CD8-positive, alpha-beta memory T cell (primary cell): ENCODE measurements at regions of chrX and their contacts with region 1.

Region 1: GRCh38 chrX:12974796-12975669 is at the start of gene TMSB4X:
- DNase-seq: peak; percentile 72 to 92 (median 79)
- H3K4me3 ChIP-seq: peak within 1 kb of the TSS; percentile 97
- H3K4me3 Mint-ChIP-seq: peak within 1 kb of the TSS; percentile 97 to 100 (median 98)
- H3K27ac ChIP-seq: peak within 1 kb of the TSS; percentile 96
- H3K27ac Mint-ChIP-seq: peak within 1 kb of the TSS; percentile 81 to 99 (median 96)
- H3K4me1 ChIP-seq: peaks cover 21% of the 10 kb centered on the region
- H3K4me1 Mint-ChIP-seq: peaks cover 32 to 58% (median 58%) of the 10 kb centered on the region in 3 donors
- H3K27me3 ChIP-seq: no peaks in the 10 kb centered on the region
- H3K27me3 Mint-ChIP-seq: peaks cover 0 to 39% of the 10 kb centered on the region in 2 donors
- total RNA-seq, gene TMSB4X: 3,415 to 3,478 TPM

Region 2: DNA sequence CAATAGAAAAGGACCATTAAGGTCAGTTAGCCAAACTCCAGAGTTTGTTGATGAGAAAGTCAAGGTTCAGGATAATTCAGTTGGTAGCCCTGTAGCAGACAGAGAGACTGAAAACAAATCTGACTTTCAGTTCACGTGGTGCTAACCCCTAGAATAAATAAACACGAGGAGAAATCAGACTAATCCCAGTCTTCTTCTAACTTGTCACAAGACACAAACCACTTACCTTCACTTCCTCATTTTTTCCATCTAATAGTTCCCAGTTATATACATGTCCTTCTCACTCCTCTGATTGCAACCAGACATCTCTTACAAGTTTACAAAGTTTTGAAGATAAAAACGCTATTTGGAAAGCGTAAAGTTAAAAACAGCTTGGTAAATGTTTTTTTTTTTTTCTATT is 100.5 kb before region 1 on chrX:
- CTCF ChIA-PET with region 1: no interaction called
- POLR2A ChIA-PET with region 1: no interaction called
- DNase-seq: no peak
- H3K4me3 ChIP-seq: no peak overlapping the region
- H3K4me3 Mint-ChIP-seq: no peak overlapping the region
- H3K27ac ChIP-seq: no peak overlapping the region
- H3K27ac Mint-ChIP-seq: no peak overlapping the region
- H3K4me1 ChIP-seq: no peaks in the 10 kb centered on the region
- H3K4me1 Mint-ChIP-seq: no peaks in the 10 kb centered on the region
- H3K27me3 ChIP-seq: no peaks in the 10 kb centered on the region
- H3K27me3 Mint-ChIP-seq: peaks cover 0 to 11% of the 10 kb centered on the region in 2 donors

Region 3: GRCh38 chrX:12946838-12947544 is 28.0 kb before region 1 on chrX:
- CTCF ChIA-PET with region 1: interaction called, 224 read pairs
- POLR2A ChIA-PET with region 1: interaction called, 194 read pairs
- DNase-seq: peak; percentile 49 to 79 (median 73)
- H3K4me3 ChIP-seq: peak overlapping the region; percentile 44
- H3K4me3 Mint-ChIP-seq: peak overlapping the region in 6 of 7 donors; percentile 10 to 83 (median 72)
- H3K27ac ChIP-seq: peak overlapping the region; percentile 16
- H3K27ac Mint-ChIP-seq: peak overlapping the region; percentile 82 to 98 (median 95)
- H3K4me1 ChIP-seq: peaks cover 50% of the 10 kb centered on the region
- H3K4me1 Mint-ChIP-seq: peaks cover 53 to 60% (median 56%) of the 10 kb centered on the region in 3 donors
- H3K27me3 ChIP-seq: no peaks in the 10 kb centered on the region
- H3K27me3 Mint-ChIP-seq: peaks cover 0 to 13% of the 10 kb centered on the region in 2 donors

Region 4: GRCh38 chrX:13000301-13000811 is 25.3 kb after region 1 on chrX:
- CTCF ChIA-PET with region 1: interaction called, 14 read pairs
- POLR2A ChIA-PET with region 1: interaction called, 20 read pairs
- DNase-seq: peak in 3 of 5 donors; percentile 45 to 68 (median 59)
- H3K4me3 ChIP-seq: peak overlapping the region; percentile 38
- H3K4me3 Mint-ChIP-seq: peak overlapping the region; percentile 72 to 86 (median 75)
- H3K27ac ChIP-seq: peak overlapping the region; percentile 52
- H3K27ac Mint-ChIP-seq: peak overlapping the region; percentile 87 to 98 (median 92)
- H3K4me1 ChIP-seq: peaks cover 76% of the 10 kb centered on the region
- H3K4me1 Mint-ChIP-seq: peaks cover 65 to 87% (median 85%) of the 10 kb centered on the region in 3 donors
- H3K27me3 ChIP-seq: no peaks in the 10 kb centered on the region
- H3K27me3 Mint-ChIP-seq: peaks cover 0 to 6% of the 10 kb centered on the region in 2 donors

Region 5: GRCh38 chrX:13013363-13014110 is 38.5 kb after region 1 on chrX:
- CTCF ChIA-PET with region 1: interaction called, 3 read pairs
- POLR2A ChIA-PET with region 1: interaction called, 18 read pairs
- DNase-seq: peak in 2 of 5 donors; percentile 18 to 30
- H3K4me3 ChIP-seq: peak overlapping the region; percentile 34
- H3K4me3 Mint-ChIP-seq: peak overlapping the region; percentile 1 to 48 (median 18)
- H3K27ac ChIP-seq: peak overlapping the region; percentile 51
- H3K27ac Mint-ChIP-seq: peak overlapping the region; percentile 19 to 94 (median 83)
- H3K4me1 ChIP-seq: peaks cover 33% of the 10 kb centered on the region
- H3K4me1 Mint-ChIP-seq: peaks cover 27 to 71% (median 66%) of the 10 kb centered on the region in 3 donors
- H3K27me3 ChIP-seq: no peaks in the 10 kb centered on the region
- H3K27me3 Mint-ChIP-seq: peaks cover 0 to 22% of the 10 kb centered on the region in 2 donors

Region 6: GRCh38 chrX:13081395-13082205 is 106.6 kb after region 1 on chrX:
- CTCF ChIA-PET with region 1: interaction called, 196 read pairs
- POLR2A ChIA-PET with region 1: interaction called, 104 read pairs
- DNase-seq: peak in 2 of 5 donors; percentile 47
- H3K4me3 ChIP-seq: peak overlapping the region; percentile 5
- H3K4me3 Mint-ChIP-seq: peak overlapping the region; percentile 46 to 74 (median 68)
- H3K27ac ChIP-seq: no peak overlapping the region
- H3K27ac Mint-ChIP-seq: peak overlapping the region; percentile 88 to 98 (median 92)
- H3K4me1 ChIP-seq: peaks cover 98% of the 10 kb centered on the region
- H3K4me1 Mint-ChIP-seq: peaks cover 78 to 95% (median 94%) of the 10 kb centered on the region in 3 donors
- H3K27me3 ChIP-seq: no peaks in the 10 kb centered on the region
- H3K27me3 Mint-ChIP-seq: peaks cover 0 to 28% of the 10 kb centered on the region in 2 donors